ENCODE measurements at regions of chr15 and their contacts with region 1.

Region 1: DNA sequence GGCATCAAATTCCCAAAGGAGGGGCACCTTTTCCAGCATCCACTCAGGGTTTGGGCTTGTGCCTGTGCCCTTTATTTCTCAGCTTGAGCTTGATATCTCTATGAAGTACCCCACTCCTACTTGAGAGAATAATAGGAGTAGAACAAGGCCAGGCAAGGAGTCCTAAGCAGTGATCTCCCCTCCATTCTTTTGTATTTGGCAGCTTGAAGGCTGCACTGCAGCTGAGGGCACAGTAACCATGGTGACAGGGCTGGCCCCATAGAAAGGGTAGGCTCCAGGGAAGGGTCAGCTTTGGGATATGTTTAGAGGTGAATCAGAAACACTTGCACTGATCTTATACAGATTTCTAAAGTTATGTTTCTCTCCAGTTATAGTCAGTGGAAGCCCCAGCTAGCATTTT is 145.4 kb upstream of the SLC24A5 start:
- DNase-seq: no peak
- ATAC-seq: no peak
- H3K4me3 ChIP-seq: no peak overlapping the region
- H3K27ac ChIP-seq: no peak overlapping the region
- H3K4me1 ChIP-seq: no peaks in the 10 kb centered on the region
- H3K27me3 ChIP-seq: no peaks in the 10 kb centered on the region
- CTCF ChIP-seq: no peak
- POLR2A ChIP-seq: no peak

Region 2: DNA sequence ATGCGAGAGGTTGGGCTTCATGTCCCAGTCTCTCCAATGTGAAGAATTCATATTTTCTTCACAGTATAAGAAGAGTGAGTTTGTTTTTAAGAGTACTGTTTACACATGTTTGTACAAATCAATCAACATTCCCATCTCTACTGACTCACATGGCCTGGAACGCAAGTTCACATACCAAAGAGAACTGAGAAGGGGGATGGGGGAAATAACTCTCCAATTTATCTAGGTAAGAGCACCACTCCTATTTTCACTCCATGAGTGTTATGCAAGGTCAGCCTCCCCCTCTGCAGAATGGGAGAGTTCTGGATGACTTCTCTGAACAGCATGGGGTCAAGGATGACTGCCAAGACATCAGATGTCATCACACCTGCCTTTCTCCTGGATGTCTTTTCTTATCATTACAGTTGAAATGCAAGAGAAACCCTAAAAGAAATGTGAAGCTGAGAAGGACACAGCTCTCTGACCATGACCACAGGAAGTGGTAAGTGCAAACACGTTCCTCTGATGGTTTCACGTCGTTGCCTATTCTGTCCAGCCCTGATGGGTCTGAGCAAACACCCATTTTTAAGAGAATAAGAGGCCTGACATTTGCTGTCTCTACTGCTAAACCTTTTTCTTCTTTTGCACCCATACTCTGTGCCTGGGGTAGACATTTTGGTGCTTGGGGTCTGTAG is 162.9 kb before region 1 on chr15:
- intact Hi-C with region 1: loop called in 1 of 10 experiments (anchors 10 kb)
- DNase-seq: no peak
- ATAC-seq: no peak
- H3K4me3 ChIP-seq: no peak overlapping the region
- H3K27ac ChIP-seq: no peak overlapping the region
- H3K4me1 ChIP-seq: no peaks in the 10 kb centered on the region
- H3K27me3 ChIP-seq: no peaks in the 10 kb centered on the region
- CTCF ChIP-seq: no peak
- POLR2A ChIP-seq: no peak

Measured in heart left ventricle (tissue), 16 donors.